Activated T-helper 1 cell treated with anti-CD3 and anti-CD28 coated beads, Interleukin-12 subunit alpha, Interleukin-12 subunit beta, Interleukin-2, Interleukin-4 antibody, amounts not matched to agents 30 ng/mL and 10 ng/mL and 1 ng/mL, durations not matched to agents 14 hours and 24 hours and 36 hours (primary cell): ENCODE measurements at regions of chr4 and their contacts with region 1.

Region 1: DNA sequence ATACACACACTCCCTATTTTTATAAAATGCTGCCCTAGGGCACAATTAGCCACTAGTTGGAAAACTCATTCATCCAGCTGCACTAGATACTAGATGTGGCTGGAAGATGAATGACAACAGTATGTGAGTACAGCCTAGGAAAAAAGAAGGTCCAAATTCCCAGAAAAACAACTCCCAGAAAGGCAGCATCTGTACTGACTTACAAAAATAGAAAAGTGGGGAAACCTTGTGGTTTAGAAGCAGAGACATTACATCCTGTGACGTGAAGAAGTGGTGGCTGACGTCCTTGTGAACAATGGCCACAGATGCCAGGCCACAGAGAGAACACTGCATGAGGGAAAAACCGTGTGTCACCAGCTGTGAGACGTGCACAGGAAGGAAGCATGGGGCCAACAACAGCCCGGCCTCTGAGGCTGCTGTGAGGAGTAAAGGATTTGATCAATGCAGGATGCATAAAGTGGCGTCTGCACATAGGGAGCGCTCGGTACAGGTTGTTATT is 81.2 kb downstream of the SPRY1 start:
- DNase-seq: peak; percentile 67
- H3K4me3 Mint-ChIP-seq: peak overlapping the region; percentile 56
- H3K27ac Mint-ChIP-seq: peak overlapping the region; percentile 89
- H3K4me1 Mint-ChIP-seq: peaks cover 55% of the 10 kb centered on the region
- H3K27me3 Mint-ChIP-seq: no peaks in the 10 kb centered on the region

Region 2: GRCh38 chr4:123444290-123444731 is 33.4 kb before region 1 on chr4:
- intact Hi-C with region 1: loop called (anchors 1 kb)
- DNase-seq: peak; percentile 20
- H3K4me3 Mint-ChIP-seq: peak overlapping the region; percentile 48
- H3K27ac Mint-ChIP-seq: peak overlapping the region; percentile 94
- H3K4me1 Mint-ChIP-seq: peaks cover 35% of the 10 kb centered on the region
- H3K27me3 Mint-ChIP-seq: no peaks in the 10 kb centered on the region

Region 3: GRCh38 chr4:123455360-123455759 is 22.4 kb before region 1 on chr4:
- intact Hi-C with region 1: loop called (anchors 2 kb)
- DNase-seq: no peak
- H3K4me3 Mint-ChIP-seq: no peak overlapping the region
- H3K27ac Mint-ChIP-seq: no peak overlapping the region
- H3K4me1 Mint-ChIP-seq: peaks cover 12% of the 10 kb centered on the region
- H3K27me3 Mint-ChIP-seq: no peaks in the 10 kb centered on the region

Region 4: DNA sequence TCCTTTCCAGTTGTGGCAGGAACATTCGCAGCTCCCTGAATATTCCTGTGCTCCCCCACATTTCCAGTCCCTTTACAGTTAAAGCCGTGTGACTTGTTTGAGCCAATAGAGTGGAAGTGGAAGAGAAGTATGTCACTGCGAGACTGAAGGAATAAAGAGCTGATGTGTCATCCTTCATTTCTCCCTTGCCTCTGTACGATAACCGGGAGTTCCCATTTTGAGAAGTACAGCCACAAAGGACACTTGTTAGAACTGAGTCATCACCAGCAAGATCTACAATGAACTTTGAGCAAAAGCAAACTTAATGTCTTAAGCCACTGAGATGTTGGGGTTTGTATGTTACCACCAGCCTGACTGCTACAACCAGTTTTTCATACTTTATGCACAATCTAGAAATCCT is 11.2 kb after region 1 on chr4:
- intact Hi-C with region 1: loop called (anchors 1 kb)
- DNase-seq: no peak
- H3K4me3 Mint-ChIP-seq: peak overlapping the region; percentile 32
- H3K27ac Mint-ChIP-seq: peak overlapping the region; percentile 72
- H3K4me1 Mint-ChIP-seq: peaks cover 9% of the 10 kb centered on the region
- H3K27me3 Mint-ChIP-seq: peaks cover 2% of the 10 kb centered on the region